Mammary epithelial cell (primary cell): ENCODE measurements at regions of chr16 and their contacts with region 1.

Region 1: GRCh38 chr16:9008601-9009260 is 45.0 kb upstream of the USP7 start:
- DNase-seq: peak; percentile 25
- H3K4me3 ChIP-seq: peak overlapping the region in 1 of 3 experiments; percentile 37
- H3K27ac ChIP-seq: no peak overlapping the region
- H3K4me1 ChIP-seq: peaks cover 3% of the 10 kb centered on the region
- H3K27me3 ChIP-seq: no peaks in the 10 kb centered on the region
- CTCF ChIP-seq: peak; percentile 65 to 91

Region 2: GRCh38 chr16:8567750-8568617 is 440.7 kb before region 1 on chr16:
- CTCF ChIA-PET with region 1: no interaction called
- dilution Hi-C with region 1: no loop called
- in situ Hi-C with region 1: no loop called
- intact Hi-C with region 1: loop called (anchors 5 kb)
- DNase-seq: peak; percentile 79
- H3K4me3 ChIP-seq: no peak overlapping the region
- H3K27ac ChIP-seq: no peak overlapping the region
- H3K4me1 ChIP-seq: no peaks in the 10 kb centered on the region
- H3K27me3 ChIP-seq: no peaks in the 10 kb centered on the region
- CTCF ChIP-seq: peak; percentile 97 to 99

Region 3: DNA sequence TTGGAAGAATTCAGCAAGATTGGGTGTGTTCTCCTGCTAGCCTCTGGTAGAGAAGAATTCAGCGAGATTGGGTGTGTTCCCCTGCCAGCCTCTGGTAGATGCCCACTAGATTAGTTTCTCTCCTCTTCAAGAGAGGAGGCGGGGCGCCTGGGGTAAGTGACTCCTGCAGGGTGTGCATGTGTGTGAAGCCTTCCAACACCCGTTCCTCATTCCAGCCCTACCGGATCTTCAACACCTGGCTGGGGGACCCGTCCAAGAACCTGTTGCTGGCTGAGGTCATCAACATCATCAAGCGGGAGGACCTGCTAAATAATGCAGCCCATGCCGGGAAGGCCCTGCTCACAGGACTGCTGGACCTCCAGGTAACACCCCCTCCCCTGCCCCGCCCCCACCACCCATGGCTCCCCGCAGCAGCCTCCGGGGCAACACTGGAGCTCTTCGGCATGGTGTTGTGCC is 232.6 kb before region 1 on chr16:
- CTCF ChIA-PET with region 1: no interaction called
- dilution Hi-C with region 1: no loop called
- in situ Hi-C with region 1: no loop called
- intact Hi-C with region 1: no loop called
- DNase-seq: no peak
- H3K4me3 ChIP-seq: no peak overlapping the region
- H3K27ac ChIP-seq: no peak overlapping the region
- H3K4me1 ChIP-seq: no peaks in the 10 kb centered on the region
- H3K27me3 ChIP-seq: no peaks in the 10 kb centered on the region
- CTCF ChIP-seq: no peak

Region 4: DNA sequence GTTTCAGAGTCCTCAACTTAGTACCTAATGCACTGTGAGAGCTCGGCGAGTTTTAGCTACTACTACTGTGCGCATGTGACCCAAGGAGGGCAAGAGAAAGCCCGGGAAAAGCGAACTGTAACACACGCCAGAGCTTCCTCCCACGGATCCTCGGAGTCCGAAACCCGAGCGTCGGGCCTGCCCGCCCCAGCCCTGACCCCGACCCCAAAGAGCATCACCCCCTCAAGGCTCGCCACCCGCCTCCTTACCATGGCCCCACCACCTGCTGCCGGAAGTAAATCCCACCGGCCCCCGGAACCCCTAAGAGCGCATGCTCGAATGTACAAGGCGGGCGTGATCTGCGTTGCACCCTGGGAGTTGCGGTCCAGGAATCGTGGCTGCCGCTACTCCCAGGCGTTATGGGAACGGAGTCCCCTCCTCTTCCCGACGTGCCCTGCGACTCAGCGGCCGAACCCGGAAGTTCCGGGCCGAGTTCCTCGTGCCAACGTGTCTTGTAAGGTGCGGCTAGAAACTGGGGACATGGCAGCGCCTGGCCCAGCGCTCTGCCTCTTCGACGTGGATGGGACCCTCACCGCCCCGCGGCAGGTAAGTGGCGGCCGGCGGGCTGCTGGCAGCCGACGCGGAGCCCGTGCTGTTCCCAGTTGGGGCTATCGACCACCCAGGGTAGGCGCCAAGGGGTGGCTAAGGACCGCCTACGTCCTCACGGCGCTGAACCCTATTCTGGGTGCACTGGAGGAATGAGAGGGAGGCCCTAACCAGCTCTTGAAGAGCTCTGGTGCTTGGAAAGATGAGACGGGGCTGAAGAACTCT is 211.2 kb before region 1 on chr16 and contains the starts of genes PMM2 and TMEM186:
- CTCF ChIA-PET with region 1: interaction called, 8 read pairs
- dilution Hi-C with region 1: no loop called
- in situ Hi-C with region 1: no loop called
- intact Hi-C with region 1: loop called (anchors 10 kb)
- DNase-seq: peak; percentile 95
- H3K4me3 ChIP-seq: peak within 1 kb of the TSS; percentile 78 to 95 (median 82)
- H3K27ac ChIP-seq: peak within 1 kb of the TSS; percentile 88
- H3K4me1 ChIP-seq: peaks cover 15% of the 10 kb centered on the region
- H3K27me3 ChIP-seq: no peaks in the 10 kb centered on the region
- CTCF ChIP-seq: no peak
- total RNA-seq, gene PMM2: 36.2 to 67.8 TPM
- total RNA-seq, gene TMEM186: 4.5 to 9.8 TPM

Region 5: DNA sequence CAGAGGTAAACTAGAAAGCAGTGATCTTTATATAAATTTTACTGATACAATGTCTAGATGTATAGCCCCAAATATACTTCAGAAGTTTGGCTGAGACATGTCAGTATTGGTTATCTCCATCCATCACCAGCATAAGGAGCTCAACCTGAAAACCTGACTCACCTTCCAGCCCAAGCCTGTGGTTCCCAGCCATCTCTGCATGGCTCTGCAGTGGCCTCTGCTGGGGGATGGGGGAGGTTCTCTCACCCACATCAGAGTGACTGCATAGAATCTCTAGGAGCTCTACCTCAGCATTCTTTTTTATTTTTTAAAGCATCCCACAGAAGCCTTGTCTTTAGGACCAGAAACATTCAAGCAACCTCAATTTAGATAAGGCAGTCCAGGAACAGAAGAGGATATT is 72.3 kb before region 1 on chr16:
- CTCF ChIA-PET with region 1: interaction called, 8 read pairs
- dilution Hi-C with region 1: no loop called
- in situ Hi-C with region 1: no loop called
- intact Hi-C with region 1: loop called (anchors 1 kb)
- DNase-seq: peak; percentile 74
- H3K4me3 ChIP-seq: no peak overlapping the region
- H3K27ac ChIP-seq: no peak overlapping the region
- H3K4me1 ChIP-seq: peaks cover 14% of the 10 kb centered on the region
- H3K27me3 ChIP-seq: no peaks in the 10 kb centered on the region
- CTCF ChIP-seq: peak; percentile 66 to 88

Region 6: GRCh38 chr16:9053006-9053601 is 44.4 kb after region 1 on chr16:
- CTCF ChIA-PET with region 1: interaction called, 14 read pairs
- dilution Hi-C with region 1: no loop called
- in situ Hi-C with region 1: no loop called
- intact Hi-C with region 1: no loop called
- DNase-seq: peak; percentile 44
- H3K4me3 ChIP-seq: no peak overlapping the region
- H3K27ac ChIP-seq: no peak overlapping the region
- H3K4me1 ChIP-seq: peaks cover 15% of the 10 kb centered on the region
- H3K27me3 ChIP-seq: no peaks in the 10 kb centered on the region
- CTCF ChIP-seq: no peak

Region 7: DNA sequence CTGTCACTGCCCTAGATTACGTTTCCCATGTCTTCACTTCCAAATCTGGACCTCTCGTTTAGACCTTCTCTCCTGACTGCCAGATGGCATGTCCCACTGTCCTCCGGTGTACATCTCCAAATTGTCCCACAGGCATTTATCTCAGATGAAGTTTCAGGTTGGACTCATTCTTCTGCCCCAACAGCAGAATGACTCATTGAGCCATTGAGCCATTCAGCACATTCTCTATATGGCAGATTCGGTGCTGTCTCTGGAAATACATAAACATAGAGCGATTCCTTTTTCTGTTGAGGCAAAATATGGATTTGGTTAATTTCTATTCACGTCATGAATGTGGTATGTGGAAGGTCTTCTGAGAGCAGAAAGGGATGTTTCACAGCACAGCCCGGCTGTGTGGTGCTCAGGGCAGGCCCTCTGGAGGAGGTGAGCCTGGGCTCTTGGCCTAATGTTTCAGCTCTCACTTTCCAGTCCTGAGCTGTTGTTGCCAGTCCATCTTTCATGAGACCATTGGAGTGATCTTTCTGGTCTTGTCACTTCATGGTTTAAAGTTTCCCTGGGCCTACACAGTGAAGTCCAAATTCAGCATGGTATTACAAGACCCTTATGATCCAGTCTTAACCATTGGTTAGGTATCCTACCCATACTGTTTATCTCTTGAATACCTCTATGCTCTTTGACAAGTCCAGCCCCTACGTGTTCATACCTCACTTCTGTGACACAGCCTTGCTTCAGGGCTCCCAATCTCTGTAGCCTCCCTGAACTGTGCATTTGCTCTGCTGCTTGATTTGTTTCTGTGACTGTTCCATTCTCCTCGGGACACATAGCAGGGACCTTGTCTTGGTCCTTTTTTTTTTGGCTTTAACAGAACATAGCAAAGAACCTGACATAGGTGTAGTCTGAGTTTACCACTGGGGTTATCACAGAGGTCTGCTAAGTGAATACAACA is 98.6 kb after region 1 on chr16:
- CTCF ChIA-PET with region 1: no interaction called
- dilution Hi-C with region 1: no loop called
- in situ Hi-C with region 1: no loop called
- intact Hi-C with region 1: no loop called
- DNase-seq: no peak
- H3K4me3 ChIP-seq: no peak overlapping the region
- H3K27ac ChIP-seq: no peak overlapping the region
- H3K4me1 ChIP-seq: peaks cover 20% of the 10 kb centered on the region
- H3K27me3 ChIP-seq: no peaks in the 10 kb centered on the region
- CTCF ChIP-seq: no peak